Naive thymus-derived CD4-positive, alpha-beta T cell (primary cell): ENCODE measurements at regions of chr17 and their contacts with region 1.

Region 1: DNA sequence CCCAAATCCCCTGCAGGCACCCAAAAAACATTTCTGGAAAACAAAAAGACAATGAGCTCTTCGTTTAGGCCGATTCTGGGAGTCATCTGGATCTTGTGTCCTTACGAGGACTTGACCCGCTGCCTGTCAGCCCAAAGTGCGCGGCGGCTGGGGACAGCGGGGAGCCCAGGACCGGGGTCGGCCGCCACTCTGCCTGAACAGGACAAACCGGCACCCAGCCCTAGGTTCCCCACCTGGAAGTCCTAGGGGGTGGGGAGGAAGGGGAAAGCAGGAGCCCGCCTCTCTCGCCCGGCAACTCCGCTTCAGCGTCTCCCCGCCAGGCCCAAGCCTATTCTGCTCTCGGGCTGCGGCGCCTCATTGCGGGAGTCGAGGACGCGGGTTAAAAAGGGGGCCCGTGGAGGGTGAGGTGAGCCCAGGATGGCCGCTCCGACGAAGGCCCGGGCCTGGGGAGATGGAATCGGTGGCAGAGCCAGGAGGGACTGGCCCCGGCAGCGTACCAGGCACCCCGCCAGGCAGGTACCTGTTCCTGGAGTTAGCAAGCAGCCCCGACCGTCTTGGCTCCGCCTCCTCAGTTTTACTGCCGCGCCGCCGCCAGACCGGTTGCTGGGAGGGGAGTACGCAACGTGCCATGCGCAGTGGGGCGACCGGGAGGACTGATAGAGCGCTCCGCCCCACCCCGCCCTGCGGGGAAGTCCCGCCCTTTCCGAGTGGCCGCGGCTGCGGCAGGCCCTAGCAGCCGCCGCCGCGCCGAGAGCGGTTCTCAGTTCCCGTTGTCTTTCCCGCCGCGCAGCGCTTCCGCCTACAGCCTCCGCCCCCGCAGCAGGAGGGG is at the start of gene STRADA:
- DNase-seq: peak; percentile 95 to 99 (median 98)
- ATAC-seq: peak; percentile 97
- H3K4me3 ChIP-seq: peak within 1 kb of the TSS; percentile 74
- H3K4me3 Mint-ChIP-seq: peak within 1 kb of the TSS; percentile 83 to 98 (median 89)
- H3K27ac ChIP-seq: peak within 1 kb of the TSS; percentile 96
- H3K27ac Mint-ChIP-seq: peak within 1 kb of the TSS; percentile 88 to 99 (median 93)
- H3K4me1 ChIP-seq: peaks cover 0 to 8% of the 10 kb centered on the region in 2 donors
- H3K4me1 Mint-ChIP-seq: peaks cover 6 to 36% (median 24%) of the 10 kb centered on the region in 7 donors
- H3K27me3 ChIP-seq: no peaks in the 10 kb centered on the region
- H3K27me3 Mint-ChIP-seq: no peaks in the 10 kb centered on the region
- total RNA-seq, gene STRADA: 51.0 to 69.7 (median 54.2) TPM

Region 2: DNA sequence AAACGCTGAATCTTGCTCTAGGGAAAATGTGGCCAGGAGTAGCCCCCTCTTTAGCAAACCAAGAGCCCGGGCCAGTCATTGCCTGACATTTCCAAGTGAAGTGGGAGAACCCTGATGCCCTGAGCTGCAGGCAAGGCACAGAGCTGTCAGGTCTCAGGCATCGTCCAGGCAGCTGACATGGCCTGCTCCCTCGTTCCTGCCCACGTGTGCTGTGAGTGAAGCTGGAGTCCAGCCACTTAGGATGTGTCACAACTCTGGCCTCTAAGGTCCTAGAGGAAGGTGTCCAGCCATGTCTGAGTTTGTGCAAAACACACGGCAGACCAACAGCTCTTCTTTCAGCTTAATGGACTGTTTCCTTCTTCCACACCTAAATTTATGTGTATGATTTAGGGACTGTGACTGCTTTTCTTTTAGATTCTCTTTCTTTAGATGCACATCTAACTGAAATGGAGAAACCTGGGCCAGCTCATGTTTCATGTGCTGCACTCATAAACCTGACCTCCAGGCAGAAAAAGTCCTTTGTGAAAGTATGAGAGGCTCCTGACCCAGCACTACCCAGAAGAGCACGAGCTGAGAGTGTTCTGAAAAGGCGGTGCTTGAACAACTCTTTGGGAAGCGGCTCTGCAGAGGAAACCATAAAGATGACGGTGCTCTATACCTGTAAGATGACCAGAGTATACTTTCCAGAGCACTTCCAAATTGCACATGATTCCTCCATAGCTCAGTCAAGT is 26.7 kb before region 1 on chr17:
- CTCF ChIA-PET with region 1: interaction called, 4 read pairs
- POLR2A ChIA-PET with region 1: interaction called, 129 read pairs
- intact Hi-C with region 1: no loop called
- DNase-seq: no peak
- ATAC-seq: no peak
- H3K4me3 ChIP-seq: no peak overlapping the region
- H3K4me3 Mint-ChIP-seq: no peak overlapping the region
- H3K27ac ChIP-seq: no peak overlapping the region
- H3K27ac Mint-ChIP-seq: peak overlapping the region in 3 of 9 donors; percentile 41 to 76 (median 62)
- H3K4me1 ChIP-seq: peaks cover 4 to 11% of the 10 kb centered on the region in 2 donors
- H3K4me1 Mint-ChIP-seq: peaks cover 7 to 21% (median 15%) of the 10 kb centered on the region in 7 donors
- H3K27me3 ChIP-seq: no peaks in the 10 kb centered on the region
- H3K27me3 Mint-ChIP-seq: no peaks in the 10 kb centered on the region

Region 3: DNA sequence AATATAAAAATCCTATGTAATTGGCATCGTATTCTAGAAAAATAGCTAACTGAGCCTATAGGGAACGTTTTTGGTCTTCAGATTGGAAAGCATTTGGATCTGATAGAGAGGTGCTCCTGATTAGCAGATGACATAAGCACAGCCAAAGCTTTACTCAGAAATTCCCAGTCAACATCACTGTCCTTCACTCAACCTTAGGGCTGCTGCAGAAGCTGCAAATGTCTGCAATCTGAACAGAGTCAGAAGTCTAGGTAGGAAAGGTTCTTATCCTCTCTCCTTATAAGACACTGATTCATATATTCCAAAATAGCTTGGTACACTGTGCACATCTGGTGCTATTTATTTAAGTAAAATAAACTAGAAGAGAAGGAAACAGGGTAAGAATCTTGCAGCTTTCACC is 19.0 kb before region 1 on chr17:
- CTCF ChIA-PET with region 1: no interaction called
- POLR2A ChIA-PET with region 1: no interaction called
- intact Hi-C with region 1: loop called in 1 of 2 experiments (anchors 2 kb)
- DNase-seq: no peak
- ATAC-seq: no peak
- H3K4me3 ChIP-seq: no peak overlapping the region
- H3K4me3 Mint-ChIP-seq: no peak overlapping the region
- H3K27ac ChIP-seq: no peak overlapping the region
- H3K27ac Mint-ChIP-seq: no peak overlapping the region
- H3K4me1 ChIP-seq: no peaks in the 10 kb centered on the region
- H3K4me1 Mint-ChIP-seq: peaks cover 0 to 7% (median 2%) of the 10 kb centered on the region in 7 donors
- H3K27me3 ChIP-seq: no peaks in the 10 kb centered on the region
- H3K27me3 Mint-ChIP-seq: no peaks in the 10 kb centered on the region

Region 4: GRCh38 chr17:63751806-63752205 is 10.4 kb after region 1 on chr17:
- CTCF ChIA-PET with region 1: no interaction called
- POLR2A ChIA-PET with region 1: interaction called, 9 read pairs
- intact Hi-C with region 1: loop called (anchors 1 kb)
- DNase-seq: peak in 7 of 9 donors; percentile 26 to 52 (median 43)
- ATAC-seq: peak; percentile 83
- H3K4me3 ChIP-seq: no peak overlapping the region
- H3K4me3 Mint-ChIP-seq: peak overlapping the region; percentile 9 to 77 (median 62)
- H3K27ac ChIP-seq: peak overlapping the region; percentile 67
- H3K27ac Mint-ChIP-seq: peak overlapping the region; percentile 16 to 83 (median 76)
- H3K4me1 ChIP-seq: peaks cover 0 to 5% of the 10 kb centered on the region in 2 donors
- H3K4me1 Mint-ChIP-seq: peaks cover 8 to 21% (median 18%) of the 10 kb centered on the region in 7 donors
- H3K27me3 ChIP-seq: no peaks in the 10 kb centered on the region
- H3K27me3 Mint-ChIP-seq: no peaks in the 10 kb centered on the region

Region 5: GRCh38 chr17:63773381-63774140 is 32.1 kb after region 1 on chr17 and contains the start of gene CCDC47:
- CTCF ChIA-PET with region 1: interaction called, 11 read pairs
- POLR2A ChIA-PET with region 1: interaction called, 47 read pairs
- intact Hi-C with region 1: loop called (anchors 1 kb)
- DNase-seq: peak; percentile 92 to 99 (median 99)
- ATAC-seq: peak; percentile 88
- H3K4me3 ChIP-seq: peak within 1 kb of the TSS; percentile 85
- H3K4me3 Mint-ChIP-seq: peak within 1 kb of the TSS; percentile 91 to 99 (median 98)
- H3K27ac ChIP-seq: peak within 1 kb of the TSS; percentile 100
- H3K27ac Mint-ChIP-seq: peak within 1 kb of the TSS; percentile 97 to 100 (median 99)
- H3K4me1 ChIP-seq: peaks cover 21 to 46% of the 10 kb centered on the region in 2 donors
- H3K4me1 Mint-ChIP-seq: peaks cover 31 to 84% (median 62%) of the 10 kb centered on the region in 7 donors
- H3K27me3 ChIP-seq: no peaks in the 10 kb centered on the region
- H3K27me3 Mint-ChIP-seq: peaks cover 0 to 7% (median 0%) of the 10 kb centered on the region in 5 donors
- total RNA-seq, gene CCDC47: 31.8 to 62.9 (median 34.7) TPM

Region 6: DNA sequence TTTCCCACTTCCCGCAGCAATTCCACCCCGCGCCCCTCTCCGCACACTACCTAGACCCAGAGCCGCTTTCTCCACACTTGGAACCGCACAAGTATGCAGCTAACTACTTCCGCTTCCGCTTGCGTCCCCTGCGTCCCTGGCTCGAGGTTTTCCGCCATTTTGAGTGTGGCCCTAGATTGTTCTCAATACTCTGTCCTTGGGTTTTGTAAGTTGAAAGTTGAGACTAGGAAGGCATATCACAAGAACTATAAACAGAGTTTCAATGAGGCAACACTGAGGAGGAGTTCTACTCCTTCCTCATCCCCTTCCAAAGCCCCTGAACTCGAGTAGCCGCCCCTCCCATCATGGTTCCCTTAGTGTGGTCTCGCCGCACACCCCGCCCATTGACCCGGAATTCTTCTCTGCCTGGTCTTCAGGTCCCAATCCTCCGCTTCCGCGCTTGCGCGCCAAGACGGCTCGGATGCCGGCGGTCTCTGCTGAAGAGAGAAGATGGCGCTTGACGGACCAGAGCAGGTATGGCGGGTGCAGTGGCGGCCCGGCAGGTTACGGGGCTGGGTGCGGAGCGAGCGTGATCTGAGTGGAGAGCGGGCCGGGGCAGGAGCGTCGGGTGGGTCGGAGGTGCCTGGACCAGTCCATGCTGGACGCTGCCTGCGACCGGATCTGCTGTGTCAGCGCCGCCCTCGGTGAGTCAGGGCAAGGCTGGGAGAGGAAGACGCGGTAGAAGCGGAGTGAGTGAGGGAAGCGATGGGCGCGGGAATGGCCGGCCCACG is 85.8 kb after region 1 on chr17 and contains the starts of genes FTSJ3 and PSMC5:
- CTCF ChIA-PET with region 1: interaction called, 3 read pairs
- POLR2A ChIA-PET with region 1: interaction called, 8 read pairs
- intact Hi-C with region 1: loop called (anchors 1 kb)
- DNase-seq: peak; percentile 89 to 98 (median 96)
- ATAC-seq: peak; percentile 97
- H3K4me3 ChIP-seq: peak within 1 kb of the TSS; percentile 89
- H3K4me3 Mint-ChIP-seq: peak within 1 kb of the TSS; percentile 93 to 100 (median 98)
- H3K27ac ChIP-seq: peak within 1 kb of the TSS; percentile 87
- H3K27ac Mint-ChIP-seq: peak within 1 kb of the TSS; percentile 98 to 100 (median 99)
- H3K4me1 ChIP-seq: peaks cover 27 to 46% of the 10 kb centered on the region in 2 donors
- H3K4me1 Mint-ChIP-seq: peaks cover 43 to 82% (median 77%) of the 10 kb centered on the region in 7 donors
- H3K27me3 ChIP-seq: no peaks in the 10 kb centered on the region
- H3K27me3 Mint-ChIP-seq: no peaks in the 10 kb centered on the region
- total RNA-seq, gene FTSJ3: 38.1 to 66.2 (median 55.8) TPM
- total RNA-seq, gene PSMC5: 68.4 to 153 (median 105) TPM

Region 7: GRCh38 chr17:63842540-63843386 is 101.3 kb after region 1 on chr17 and contains the start of gene SMARCD2:
- CTCF ChIA-PET with region 1: no interaction called
- POLR2A ChIA-PET with region 1: interaction called, 8 read pairs
- intact Hi-C with region 1: loop called (anchors 1 kb)
- DNase-seq: peak; percentile 94 to 99 (median 98)
- ATAC-seq: peak; percentile 96
- H3K4me3 ChIP-seq: peak within 1 kb of the TSS; percentile 87
- H3K4me3 Mint-ChIP-seq: peak within 1 kb of the TSS; percentile 92 to 98 (median 95)
- H3K27ac ChIP-seq: peak within 1 kb of the TSS; percentile 96
- H3K27ac Mint-ChIP-seq: peak within 1 kb of the TSS; percentile 87 to 95 (median 92)
- H3K4me1 ChIP-seq: peaks cover 34 to 36% of the 10 kb centered on the region in 2 donors
- H3K4me1 Mint-ChIP-seq: peaks cover 27 to 52% (median 44%) of the 10 kb centered on the region in 7 donors
- H3K27me3 ChIP-seq: no peaks in the 10 kb centered on the region
- H3K27me3 Mint-ChIP-seq: no peaks in the 10 kb centered on the region
- total RNA-seq, gene SMARCD2: 102 to 148 (median 109) TPM